ENCODE measurements at regions of chr9 and their contacts with region 1.

Region 1: GRCh38 chr9:72396247-72397091 is 31.5 kb upstream of the ZFAND5 start:
- DNase-seq: no peak
- H3K4me3 ChIP-seq: no peak overlapping the region
- CTCF ChIP-seq: no peak

Region 2: DNA sequence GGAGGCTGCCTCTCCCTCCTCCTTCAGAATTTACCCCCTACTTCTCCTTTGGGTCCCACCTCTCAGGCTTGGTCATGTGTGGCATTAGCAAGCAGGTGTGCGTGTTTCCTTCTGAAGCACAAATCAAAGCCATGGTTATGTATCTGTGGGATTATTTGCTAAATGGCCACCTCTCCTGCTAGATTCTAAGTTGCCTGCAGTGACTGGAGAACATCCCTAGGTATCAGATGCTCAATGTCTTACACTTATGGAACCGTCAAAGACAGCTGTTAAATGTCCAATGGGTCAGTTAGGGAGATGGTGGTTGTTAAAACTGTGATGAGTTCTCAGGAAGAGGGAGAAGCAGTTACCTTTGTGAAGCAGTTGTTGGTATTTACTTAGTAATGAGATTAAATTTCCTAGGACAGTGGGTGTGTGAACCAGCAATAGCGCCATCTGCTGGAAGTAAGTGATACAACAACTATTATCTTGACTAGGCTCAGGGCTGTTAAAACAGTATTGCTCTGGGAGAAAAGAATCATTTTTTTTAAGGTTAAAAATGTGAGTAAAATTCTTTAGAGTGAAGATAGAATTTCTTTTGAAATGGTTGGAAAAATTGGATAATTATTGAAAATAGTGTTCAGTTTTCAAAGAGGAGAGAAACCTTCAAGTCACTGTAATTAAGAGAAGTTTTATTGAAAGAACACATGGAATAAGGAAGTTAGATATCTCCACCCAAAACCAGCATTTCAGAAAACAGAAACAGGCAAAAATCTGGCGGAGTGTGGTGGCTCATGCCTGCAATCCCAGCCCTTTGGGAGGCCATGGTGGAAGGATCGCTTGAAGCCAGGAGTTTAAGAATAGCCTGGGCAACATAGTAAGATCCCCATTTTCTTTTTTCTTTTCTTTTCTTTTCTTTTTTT is 196.3 kb after region 1 on chr9:
- in situ Hi-C with region 1: loop called (anchors 25 kb)
- DNase-seq: peak; percentile 54
- H3K4me3 ChIP-seq: no peak overlapping the region
- CTCF ChIP-seq: peak; percentile 53